HEK293 (cell line): ENCODE measurements at regions of chr12 and their contacts with region 1.

Region 1: GRCh38 chr12:12786716-12787601 is 1.5 kb downstream of the APOLD1 start:
- H3K4me3 ChIP-seq: peak overlapping the region; percentile 44
- H3K27ac ChIP-seq: peak overlapping the region; percentile 72; the same call in 1 of the 2 replicates
- H3K4me1 ChIP-seq: peaks cover 26% of the 10 kb centered on the region
- CTCF ChIP-seq: no peak

Region 2: DNA sequence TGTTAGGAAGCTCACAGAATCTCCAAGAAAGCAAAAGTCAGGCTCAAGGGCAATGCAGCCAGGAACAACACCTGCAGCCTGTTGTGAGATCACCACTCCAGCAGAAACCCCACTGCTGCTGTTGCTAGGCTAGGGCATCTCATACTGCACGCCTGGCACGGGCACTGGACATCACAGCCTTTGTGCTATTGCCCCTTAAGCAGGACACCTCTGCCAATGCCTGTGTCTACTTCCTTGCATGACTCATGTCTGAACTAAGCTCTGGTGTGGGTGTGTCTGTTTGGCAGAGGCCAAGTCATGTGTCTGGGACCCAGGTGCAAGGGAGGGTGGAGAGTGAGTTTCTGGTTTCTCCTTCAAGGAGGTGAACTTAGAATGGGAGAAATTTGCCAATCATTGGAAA is 16.2 kb after region 1 on chr12:
- CTCF ChIA-PET with region 1: interaction called, 21 read pairs
- POLR2A ChIA-PET with region 1: interaction called, 6 read pairs
- H3K4me3 ChIP-seq: no peak overlapping the region
- H3K27ac ChIP-seq: no peak overlapping the region
- H3K4me1 ChIP-seq: peaks cover 8% of the 10 kb centered on the region
- CTCF ChIP-seq: no peak

Region 3: DNA sequence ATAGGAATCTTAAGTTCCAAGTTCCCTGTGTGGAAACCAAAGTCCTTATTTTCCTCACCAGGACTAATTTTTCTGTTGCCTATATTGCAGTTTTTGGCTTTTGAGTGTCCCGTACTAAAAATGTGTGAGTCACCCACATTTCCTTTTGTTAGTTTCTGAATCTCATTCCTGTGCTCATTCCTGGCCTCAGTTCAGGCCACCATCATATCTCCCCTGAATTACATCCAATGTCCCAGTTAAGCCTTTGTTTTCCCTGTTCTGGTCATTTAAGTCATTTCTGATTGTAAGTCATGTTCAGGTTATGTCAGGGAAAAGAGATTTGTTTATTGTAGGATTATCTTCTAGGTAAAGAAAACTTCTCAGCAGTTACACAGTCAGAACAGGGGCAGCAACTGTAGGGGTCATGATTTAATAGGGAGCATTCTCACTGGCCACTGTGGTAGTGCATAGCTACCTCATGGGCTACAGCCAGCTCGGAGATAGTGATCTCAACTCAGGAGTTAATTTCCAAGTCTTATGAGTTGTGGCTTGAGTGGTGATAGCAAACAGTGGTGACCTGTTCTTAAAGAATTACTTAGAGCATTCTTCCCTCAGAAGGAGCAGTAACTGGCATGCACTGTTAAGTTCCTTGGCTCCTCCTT is 32.8 kb after region 1 on chr12:
- CTCF ChIA-PET with region 1: interaction called, 28 read pairs
- POLR2A ChIA-PET with region 1: no interaction called
- H3K4me3 ChIP-seq: no peak overlapping the region
- H3K27ac ChIP-seq: no peak overlapping the region
- H3K4me1 ChIP-seq: peaks cover 5% of the 10 kb centered on the region; the same call in 1 of the 2 replicates
- CTCF ChIP-seq: no peak

Region 4: GRCh38 chr12:12916135-12916944 is 129.4 kb after region 1 on chr12:
- CTCF ChIA-PET with region 1: interaction called, 19 read pairs
- POLR2A ChIA-PET with region 1: no interaction called
- H3K4me3 ChIP-seq: no peak overlapping the region
- H3K27ac ChIP-seq: no peak overlapping the region
- H3K4me1 ChIP-seq: peaks cover 6% of the 10 kb centered on the region; the same call in 1 of the 2 replicates
- CTCF ChIP-seq: peak; percentile 95

Region 5: GRCh38 chr12:12983420-12984035 is 196.6 kb after region 1 on chr12:
- CTCF ChIA-PET with region 1: interaction called, 11 read pairs
- POLR2A ChIA-PET with region 1: no interaction called
- H3K4me3 ChIP-seq: no peak overlapping the region
- H3K27ac ChIP-seq: no peak overlapping the region
- H3K4me1 ChIP-seq: no peaks in the 10 kb centered on the region
- CTCF ChIP-seq: no peak